CD8-positive, alpha-beta T cell (primary cell): ENCODE measurements at regions of chr1 and their contacts with region 1.

Region 1: GRCh38 chr1:201703621-201704439 is 125.1 kb upstream of the IPO9 start:
- DNase-seq: peak; percentile 27 to 73 (median 60)
- ATAC-seq: peak; percentile 40
- H3K4me3 ChIP-seq: no peak overlapping the region
- H3K4me3 Mint-ChIP-seq: no peak overlapping the region
- H3K27ac ChIP-seq: no peak overlapping the region
- H3K27ac Mint-ChIP-seq: no peak overlapping the region
- H3K4me1 ChIP-seq: no peaks in the 10 kb centered on the region
- H3K4me1 Mint-ChIP-seq: no peaks in the 10 kb centered on the region
- H3K27me3 ChIP-seq: no peaks in the 10 kb centered on the region
- H3K27me3 Mint-ChIP-seq: no peaks in the 10 kb centered on the region
- CTCF ChIP-seq: peak; percentile 68

Region 2: DNA sequence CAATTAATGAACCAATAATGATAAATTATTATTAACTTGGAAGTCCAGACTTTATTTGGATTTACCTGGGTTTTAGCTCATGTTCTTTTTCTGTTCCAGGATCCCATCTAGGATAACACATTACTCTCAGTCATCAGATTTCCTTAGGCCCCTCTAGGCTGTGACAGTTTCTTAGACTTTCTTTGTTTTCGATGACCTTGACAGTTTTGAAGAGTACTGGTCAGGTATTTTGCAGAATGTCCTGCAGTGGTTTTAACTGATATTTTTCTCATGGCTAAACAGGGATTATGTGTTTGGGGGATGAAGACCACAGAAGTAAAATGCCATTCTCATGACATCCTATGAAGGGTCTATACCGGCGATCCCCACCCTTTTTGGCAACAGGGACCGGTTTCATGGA is 20.9 kb before region 1 on chr1:
- CTCF ChIA-PET with region 1: no interaction called
- POLR2A ChIA-PET with region 1: no interaction called
- intact Hi-C with region 1: loop called in 1 of 2 experiments (anchors 1 kb)
- DNase-seq: no peak
- ATAC-seq: no peak
- H3K4me3 ChIP-seq: no peak overlapping the region
- H3K4me3 Mint-ChIP-seq: no peak overlapping the region
- H3K27ac ChIP-seq: no peak overlapping the region
- H3K27ac Mint-ChIP-seq: no peak overlapping the region
- H3K4me1 ChIP-seq: no peaks in the 10 kb centered on the region
- H3K4me1 Mint-ChIP-seq: no peaks in the 10 kb centered on the region
- H3K27me3 ChIP-seq: no peaks in the 10 kb centered on the region
- H3K27me3 Mint-ChIP-seq: peaks cover 12% of the 10 kb centered on the region
- CTCF ChIP-seq: no peak

Region 3: DNA sequence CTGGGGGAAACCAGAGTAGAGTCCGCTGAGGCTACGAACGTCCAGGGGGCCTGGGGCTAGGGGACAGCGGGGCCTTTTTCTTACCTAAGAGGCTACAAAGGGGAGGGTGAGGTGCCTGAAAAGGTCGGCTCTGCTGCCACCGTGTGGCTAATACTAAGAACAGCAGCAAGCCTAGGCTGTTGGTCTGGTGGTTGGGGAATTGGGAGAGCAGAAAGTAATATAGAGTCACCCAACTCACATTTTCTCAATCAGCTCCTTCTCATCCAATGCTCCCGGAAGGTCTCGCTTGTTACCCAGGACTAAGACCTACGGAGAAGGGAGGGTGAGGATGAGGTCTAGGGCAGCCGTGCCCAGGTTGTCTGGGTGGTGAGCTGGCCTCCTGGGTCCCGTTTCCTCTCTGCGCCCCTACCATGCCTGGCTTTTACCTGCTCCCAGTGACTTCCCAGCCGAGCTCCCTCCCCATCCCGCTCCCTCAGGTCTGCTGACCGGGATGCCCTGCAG is 431.4 kb after region 1 on chr1:
- CTCF ChIA-PET with region 1: no interaction called
- POLR2A ChIA-PET with region 1: no interaction called
- intact Hi-C with region 1: no loop called
- DNase-seq: peak in 8 of 9 experiments; percentile 36 to 74 (median 52)
- ATAC-seq: peak; percentile 93
- H3K4me3 ChIP-seq: no peak overlapping the region
- H3K4me3 Mint-ChIP-seq: no peak overlapping the region
- H3K27ac ChIP-seq: no peak overlapping the region
- H3K27ac Mint-ChIP-seq: no peak overlapping the region
- H3K4me1 ChIP-seq: no peaks in the 10 kb centered on the region
- H3K4me1 Mint-ChIP-seq: peaks cover 10% of the 10 kb centered on the region
- H3K27me3 ChIP-seq: no peaks in the 10 kb centered on the region
- H3K27me3 Mint-ChIP-seq: no peaks in the 10 kb centered on the region
- CTCF ChIP-seq: peak; percentile 90

Region 4: DNA sequence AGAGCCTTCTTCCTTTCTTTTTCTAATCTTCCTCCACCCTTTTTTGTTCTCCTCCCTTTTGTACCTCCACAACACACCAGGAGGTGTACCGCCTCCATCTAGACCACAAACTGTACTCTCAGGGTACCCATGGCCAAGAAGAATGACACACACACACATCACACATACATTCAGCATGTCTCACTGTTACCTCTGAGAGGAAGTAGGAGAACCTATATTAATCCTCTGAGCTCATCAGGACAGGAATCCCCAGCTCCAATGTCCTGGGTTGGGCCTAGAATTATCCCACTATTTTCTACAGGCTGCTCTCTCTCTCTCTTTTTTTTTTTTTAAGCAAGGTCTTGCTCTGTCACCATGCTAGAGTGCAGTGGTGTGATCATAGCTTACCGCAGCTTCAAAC is 1959.5 kb after region 1 on chr1:
- CTCF ChIA-PET with region 1: no interaction called
- POLR2A ChIA-PET with region 1: no interaction called
- intact Hi-C with region 1: no loop called
- DNase-seq: peak in 1 of 9 experiments; percentile 54
- ATAC-seq: peak; percentile 67
- H3K4me3 ChIP-seq: no peak overlapping the region
- H3K4me3 Mint-ChIP-seq: peak overlapping the region; percentile 12
- H3K27ac ChIP-seq: peak overlapping the region in 1 of 2 experiments; percentile 50
- H3K27ac Mint-ChIP-seq: peak overlapping the region; percentile 73
- H3K4me1 ChIP-seq: peaks cover 22% of the 10 kb centered on the region
- H3K4me1 Mint-ChIP-seq: peaks cover 53% of the 10 kb centered on the region
- H3K27me3 ChIP-seq: no peaks in the 10 kb centered on the region
- H3K27me3 Mint-ChIP-seq: no peaks in the 10 kb centered on the region
- CTCF ChIP-seq: no peak